ENCODE measurements at regions of chr11 and their contacts with region 1.

Region 1: DNA sequence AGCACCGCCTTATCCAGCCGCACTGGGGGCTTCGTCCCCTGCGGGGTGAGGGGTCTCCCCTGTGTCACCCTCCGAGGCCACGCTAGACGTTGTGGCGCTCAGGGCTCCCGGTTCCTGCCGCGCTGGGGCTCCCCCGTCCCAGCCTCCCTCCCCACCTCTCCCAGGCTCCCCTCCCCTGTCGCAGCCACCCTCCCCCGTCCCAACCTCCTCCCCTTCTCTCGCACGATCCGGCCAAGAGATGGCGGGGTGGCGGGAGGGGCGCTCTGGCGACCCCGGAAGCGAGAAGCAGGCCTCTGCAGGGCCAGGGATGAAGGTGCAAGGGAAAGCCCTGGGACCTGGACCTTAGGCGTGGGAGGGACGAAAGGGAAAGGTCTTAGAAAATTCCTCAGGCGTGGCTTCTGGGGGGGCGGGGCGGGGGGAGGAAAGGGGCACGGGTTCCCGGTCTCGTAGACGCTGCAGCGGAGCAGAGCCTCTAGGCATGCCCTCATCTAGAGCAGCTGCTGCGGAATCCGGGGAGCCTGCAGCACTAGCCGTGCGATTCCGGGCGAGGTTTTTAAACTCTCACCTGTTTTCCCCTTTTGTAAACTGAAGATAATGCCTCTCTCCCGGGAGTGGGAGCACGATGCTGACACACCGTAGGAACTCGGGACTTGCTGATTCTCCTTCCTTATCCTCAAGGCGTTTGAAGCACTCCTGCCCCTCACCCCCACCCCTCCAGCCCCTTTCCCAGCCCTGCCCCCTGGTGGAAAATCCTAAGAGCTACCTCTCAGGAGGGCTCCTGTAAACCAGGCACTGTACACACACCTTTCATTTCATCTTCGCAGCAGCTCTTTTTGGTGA is 14.4 kb downstream of the KCNJ5 start:
- H3K4me3 Mint-ChIP-seq: peak overlapping the region; percentile 80
- H3K27ac Mint-ChIP-seq: peak overlapping the region; percentile 87
- H3K4me1 Mint-ChIP-seq: peaks cover 60% of the 10 kb centered on the region
- H3K27me3 Mint-ChIP-seq: peaks cover 13% of the 10 kb centered on the region

Region 2: GRCh38 chr11:128725630-128726319 is 179.8 kb before region 1 on chr11:
- intact Hi-C with region 1: no loop called
- H3K4me3 Mint-ChIP-seq: peak overlapping the region; percentile 60
- H3K27ac Mint-ChIP-seq: peak overlapping the region; percentile 95
- H3K4me1 Mint-ChIP-seq: peaks cover 100% of the 10 kb centered on the region
- H3K27me3 Mint-ChIP-seq: no peaks in the 10 kb centered on the region

Region 3: DNA sequence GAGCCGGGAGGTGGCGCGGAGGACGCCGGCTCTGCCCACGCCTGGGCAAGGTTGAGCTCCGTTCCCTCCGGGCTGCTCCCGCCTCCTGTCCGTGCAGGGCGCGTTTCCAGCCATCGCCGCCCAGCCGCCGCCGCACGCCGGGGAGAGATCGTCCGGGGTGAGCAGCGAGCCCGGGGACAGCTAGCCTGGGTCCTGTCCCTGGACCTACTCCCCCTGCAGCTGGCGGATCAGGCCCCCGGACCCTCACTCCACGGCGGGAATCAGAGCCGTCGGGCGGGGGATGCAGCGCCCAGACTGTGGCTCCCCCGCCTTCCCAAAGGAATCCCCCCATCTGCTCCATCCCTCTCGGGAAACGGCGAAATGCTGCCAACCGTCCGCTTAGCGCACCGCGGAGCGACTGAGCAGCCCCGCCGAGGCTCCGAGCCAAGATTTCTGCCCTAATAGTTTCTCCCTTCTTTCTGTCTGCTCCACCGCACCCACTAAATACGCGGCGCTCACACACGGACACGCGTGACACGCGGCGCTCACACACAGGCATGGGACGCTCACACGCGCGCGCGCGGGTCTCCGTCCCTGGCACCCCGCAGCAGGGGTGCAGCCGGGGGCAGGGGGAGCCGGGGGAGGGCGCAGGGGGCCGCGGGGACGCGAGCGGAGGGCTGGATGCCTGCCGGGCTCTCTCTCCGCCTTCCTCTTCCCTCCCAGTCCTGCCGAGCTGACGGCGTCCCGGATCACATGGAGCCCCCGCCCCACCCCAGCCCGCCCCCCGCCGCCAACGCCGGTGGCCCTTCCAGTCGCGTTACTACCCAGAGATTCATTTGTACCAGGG is 14.8 kb before region 1 on chr11 and contains the start of gene KCNJ5:
- intact Hi-C with region 1: loop called (anchors 2 kb)
- H3K4me3 Mint-ChIP-seq: peak within 1 kb of the TSS; percentile 73
- H3K27ac Mint-ChIP-seq: peak within 1 kb of the TSS; percentile 37
- H3K4me1 Mint-ChIP-seq: peaks cover 35% of the 10 kb centered on the region
- H3K27me3 Mint-ChIP-seq: peaks cover 50% of the 10 kb centered on the region